BJ (cell line): ENCODE measurements at regions of chr1 and their contacts with region 1.

Region 1: DNA sequence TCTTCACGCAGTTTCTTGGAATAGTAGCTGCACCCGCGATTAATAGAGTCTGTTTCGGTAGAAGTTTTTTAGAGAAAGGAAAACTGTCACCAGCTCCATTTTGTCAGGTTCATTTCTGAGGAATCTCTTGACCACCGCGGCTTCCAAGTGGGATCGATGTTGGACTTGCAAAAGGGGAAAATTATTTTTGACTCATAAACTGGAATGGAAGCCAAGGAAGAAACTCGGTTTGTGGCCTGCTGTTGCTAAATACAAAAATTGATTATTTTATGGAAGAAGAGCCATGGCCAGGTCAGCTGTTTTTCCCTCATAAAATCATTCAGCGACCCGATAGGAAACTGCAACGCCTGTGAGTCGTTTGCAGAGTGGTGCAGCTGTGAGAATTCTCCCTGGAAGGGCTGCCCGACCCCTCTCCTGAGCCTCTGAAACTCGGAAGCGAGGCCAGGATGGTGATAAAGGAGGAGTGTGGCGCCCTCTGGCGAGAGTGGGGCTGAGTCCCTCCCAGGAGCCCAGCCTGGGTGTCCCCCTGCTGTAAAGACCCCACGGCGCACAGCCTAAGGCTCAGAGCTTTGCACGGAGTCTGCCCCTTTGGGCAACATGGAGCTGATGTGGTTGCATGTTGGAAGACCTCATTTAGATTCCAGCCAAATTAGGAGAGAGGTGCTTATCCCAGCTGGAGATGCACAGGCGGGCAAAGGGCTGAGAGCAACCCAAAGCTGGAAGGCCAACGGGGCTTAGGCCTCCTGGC is 83.6 kb upstream of the SLC25A33 start:
- DNase-seq: no peak
- H3K4me3 ChIP-seq: no peak overlapping the region
- H3K27me3 ChIP-seq: peaks cover 2% of the 10 kb centered on the region
- CTCF ChIP-seq: peak; percentile 89

Region 2: DNA sequence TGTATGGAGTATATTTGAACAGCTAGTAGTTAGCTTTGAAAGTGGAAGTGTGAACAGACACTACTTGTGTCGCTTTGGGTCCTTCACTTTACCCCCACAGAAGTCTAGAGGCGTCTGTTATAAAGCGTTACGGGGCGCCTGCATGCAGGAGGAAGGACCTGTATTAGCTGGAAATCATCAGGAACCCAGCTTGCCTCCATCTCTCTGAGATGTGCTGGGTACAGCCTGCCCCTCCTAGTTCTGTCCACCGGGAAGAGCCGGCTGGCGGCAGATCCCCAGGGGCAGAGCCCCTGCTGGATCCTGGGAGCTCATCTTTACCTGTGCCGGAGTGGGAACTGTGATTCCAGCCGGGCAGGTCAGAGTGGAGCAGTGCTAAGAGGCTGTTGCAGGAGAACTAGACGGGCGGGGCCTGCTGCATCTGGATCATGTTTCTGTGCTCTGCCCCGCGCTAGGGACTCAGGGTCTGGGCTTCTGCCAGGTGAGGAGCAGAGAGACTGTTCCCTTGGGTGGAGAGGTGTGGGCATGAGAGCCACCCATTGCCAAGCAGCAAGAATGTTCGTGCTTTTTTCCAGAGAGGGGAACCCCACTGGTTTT is 185.3 kb before region 1 on chr1:
- CTCF ChIA-PET with region 1: interaction called, 65 read pairs
- POLR2A ChIA-PET with region 1: no interaction called
- DNase-seq: no peak
- H3K4me3 ChIP-seq: no peak overlapping the region
- H3K27me3 ChIP-seq: no peaks in the 10 kb centered on the region
- CTCF ChIP-seq: no peak

Region 3: GRCh38 chr1:9284061-9284460 is 171.6 kb before region 1 on chr1:
- CTCF ChIA-PET with region 1: interaction called, 102 read pairs
- POLR2A ChIA-PET with region 1: no interaction called
- DNase-seq: no peak
- H3K4me3 ChIP-seq: no peak overlapping the region
- H3K27me3 ChIP-seq: no peaks in the 10 kb centered on the region
- CTCF ChIP-seq: no peak

Region 4: DNA sequence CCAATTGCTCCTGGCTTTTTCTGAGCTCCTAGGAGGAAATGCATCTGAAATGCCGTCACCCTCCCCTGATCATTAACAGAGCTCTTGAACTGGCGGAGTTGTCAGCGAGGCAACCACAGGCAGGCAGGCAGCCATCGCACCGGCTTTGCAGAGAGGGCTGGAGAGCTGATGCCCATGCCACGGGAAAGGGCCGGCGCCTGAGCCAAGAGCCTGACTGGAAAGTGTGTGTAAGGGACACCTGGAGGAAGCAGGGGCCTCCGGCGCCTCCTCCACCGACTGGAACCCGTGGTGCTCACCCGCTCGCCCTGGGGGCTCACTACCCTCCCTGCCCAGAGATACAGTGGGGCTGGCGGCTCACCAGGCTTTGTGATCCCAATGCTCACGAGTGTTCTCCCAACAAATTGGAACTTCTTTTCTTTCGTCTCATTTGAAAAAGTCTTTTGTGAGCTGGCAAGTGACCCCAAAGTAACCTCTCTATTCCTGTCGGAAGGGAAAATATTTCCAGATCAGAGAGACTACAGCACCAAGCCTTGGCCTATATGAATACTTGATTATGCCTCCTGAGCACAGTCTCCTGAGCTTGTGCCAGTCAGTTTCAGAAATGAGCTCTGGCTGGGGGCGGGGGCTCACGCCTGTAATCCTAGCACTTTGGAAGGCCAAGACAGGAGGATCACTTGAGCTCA is 14.1 kb before region 1 on chr1:
- CTCF ChIA-PET with region 1: interaction called, 18 read pairs
- POLR2A ChIA-PET with region 1: no interaction called
- DNase-seq: no peak
- H3K4me3 ChIP-seq: no peak overlapping the region
- H3K27me3 ChIP-seq: peaks cover 3% of the 10 kb centered on the region
- CTCF ChIP-seq: no peak

Region 5: GRCh38 chr1:9473032-9473792 is 17.6 kb after region 1 on chr1:
- CTCF ChIA-PET with region 1: interaction called, 31 read pairs
- POLR2A ChIA-PET with region 1: no interaction called
- DNase-seq: peak; percentile 92
- H3K4me3 ChIP-seq: no peak overlapping the region
- H3K27me3 ChIP-seq: peaks cover 2% of the 10 kb centered on the region; the same call in 1 of the 2 replicates
- CTCF ChIP-seq: no peak

Region 6: GRCh38 chr1:9629445-9630201 is 174.0 kb after region 1 on chr1:
- CTCF ChIA-PET with region 1: no interaction called
- POLR2A ChIA-PET with region 1: no interaction called
- DNase-seq: no peak
- H3K4me3 ChIP-seq: no peak overlapping the region
- H3K27me3 ChIP-seq: no peaks in the 10 kb centered on the region
- CTCF ChIP-seq: no peak